PC-9 (cell line): ENCODE measurements at regions of chr19 and their contacts with region 1.

Region 1: DNA sequence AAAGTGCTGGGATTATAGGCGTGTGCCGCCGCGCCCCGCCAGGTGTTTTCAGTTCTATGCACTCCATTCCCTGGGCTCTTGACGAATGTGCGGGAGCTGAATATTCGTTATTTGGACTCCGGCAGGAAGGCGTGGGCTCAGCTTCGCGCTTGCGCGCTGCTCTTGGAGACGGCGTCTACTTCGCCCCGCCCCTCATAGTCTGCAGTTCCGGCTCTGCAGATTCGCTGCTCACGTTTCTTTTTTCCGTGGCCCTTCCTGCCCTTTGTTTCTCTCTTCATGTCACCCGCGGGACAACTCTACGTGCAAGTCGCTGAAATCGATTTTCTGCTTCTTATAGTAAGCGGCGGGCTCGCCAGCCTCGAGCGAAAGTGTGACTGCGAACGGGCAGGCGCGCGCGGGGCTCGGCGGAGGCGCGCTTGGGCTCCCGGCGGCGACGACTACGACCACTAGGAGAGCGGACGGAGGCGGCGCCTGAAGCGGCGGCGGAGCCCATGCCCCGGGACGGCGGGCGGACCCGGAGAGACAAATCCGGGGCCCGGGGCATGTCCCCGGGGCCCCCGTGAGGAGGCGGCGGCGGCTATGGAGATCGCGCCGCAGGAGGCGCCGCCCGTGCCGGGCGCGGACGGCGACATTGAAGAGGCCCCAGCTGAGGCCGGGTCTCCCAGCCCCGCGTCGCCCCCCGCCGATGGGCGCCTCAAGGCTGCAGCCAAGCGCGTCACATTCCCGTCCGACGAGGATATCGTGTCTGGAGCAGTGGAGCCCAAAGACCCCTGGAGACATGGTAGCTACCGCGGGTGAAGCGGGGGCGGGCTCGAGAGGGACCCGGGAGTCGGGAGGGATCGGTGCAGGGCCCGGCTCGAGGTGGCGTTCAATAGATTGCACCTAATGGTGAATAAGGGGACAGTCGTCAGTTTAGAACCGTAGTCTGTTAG is at the start of gene PPP1R37:
- DNase-seq: peak; percentile 90 to 94
- H3K4me3 ChIP-seq: peak within 1 kb of the TSS; percentile 80
- H3K27ac ChIP-seq: peak within 1 kb of the TSS; percentile 50
- H3K4me1 ChIP-seq: peaks cover 18% of the 10 kb centered on the region
- H3K27me3 ChIP-seq: no peaks in the 10 kb centered on the region
- CTCF ChIP-seq: peak; percentile 44; the same call in 1 of the 2 replicates
- total RNA-seq, gene PPP1R37: 41.1 and 49.5 TPM in 2 replicates

Region 2: DNA sequence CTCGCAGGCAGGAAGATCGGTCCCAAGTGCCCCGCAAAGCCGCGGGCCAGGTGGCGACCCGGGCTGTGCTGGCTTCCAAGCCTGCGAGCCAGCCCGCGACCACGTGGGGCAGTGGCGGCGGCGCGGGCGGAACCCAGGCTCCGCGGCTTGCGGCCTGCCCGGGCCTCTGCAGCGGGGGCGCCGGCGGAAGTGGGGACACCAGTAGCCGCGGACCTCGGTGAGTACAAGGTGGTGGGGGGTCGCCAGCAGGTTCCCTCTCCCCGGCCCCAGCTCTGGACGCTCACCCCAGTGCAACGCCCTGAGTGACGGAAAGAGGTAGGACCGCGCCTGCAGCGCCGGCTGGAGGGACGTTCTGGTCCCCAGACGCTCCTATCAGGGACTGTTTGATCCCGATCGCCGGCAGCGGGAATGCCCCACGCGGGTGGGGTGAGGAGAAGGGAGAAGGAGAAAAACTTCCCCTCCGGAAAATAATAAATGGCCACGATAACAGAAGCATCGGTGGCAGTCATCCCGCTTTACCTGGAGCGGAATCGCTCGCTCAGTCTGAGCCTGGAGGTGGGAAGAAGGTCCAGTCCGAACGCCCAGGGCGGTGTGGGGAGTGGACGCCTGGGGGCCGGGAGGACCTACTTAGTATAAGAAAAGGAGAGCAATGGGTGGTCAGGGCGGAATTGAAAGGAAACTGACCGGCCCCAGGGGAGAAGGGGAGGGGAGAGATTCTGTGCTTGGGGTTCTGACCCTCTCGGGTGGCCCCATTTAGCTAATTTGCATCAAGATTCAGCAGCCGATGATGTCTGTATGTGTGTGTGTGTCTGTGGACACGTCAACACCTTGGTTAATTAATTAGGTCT is 13.7 kb before region 1 on chr19 and contains the start of gene GEMIN7:
- CTCF ChIA-PET with region 1: interaction called, 5 read pairs
- POLR2A ChIA-PET with region 1: interaction called, 6 read pairs
- intact Hi-C with region 1: loop called (anchors 2 kb)
- DNase-seq: peak; percentile 64 to 83
- H3K4me3 ChIP-seq: peak within 1 kb of the TSS; percentile 83
- H3K27ac ChIP-seq: peak within 1 kb of the TSS; percentile 48
- H3K4me1 ChIP-seq: peaks cover 32% of the 10 kb centered on the region
- H3K27me3 ChIP-seq: no peaks in the 10 kb centered on the region
- CTCF ChIP-seq: no peak
- total RNA-seq, gene GEMIN7: 29.6 and 30.6 TPM in 2 replicates

Region 3: DNA sequence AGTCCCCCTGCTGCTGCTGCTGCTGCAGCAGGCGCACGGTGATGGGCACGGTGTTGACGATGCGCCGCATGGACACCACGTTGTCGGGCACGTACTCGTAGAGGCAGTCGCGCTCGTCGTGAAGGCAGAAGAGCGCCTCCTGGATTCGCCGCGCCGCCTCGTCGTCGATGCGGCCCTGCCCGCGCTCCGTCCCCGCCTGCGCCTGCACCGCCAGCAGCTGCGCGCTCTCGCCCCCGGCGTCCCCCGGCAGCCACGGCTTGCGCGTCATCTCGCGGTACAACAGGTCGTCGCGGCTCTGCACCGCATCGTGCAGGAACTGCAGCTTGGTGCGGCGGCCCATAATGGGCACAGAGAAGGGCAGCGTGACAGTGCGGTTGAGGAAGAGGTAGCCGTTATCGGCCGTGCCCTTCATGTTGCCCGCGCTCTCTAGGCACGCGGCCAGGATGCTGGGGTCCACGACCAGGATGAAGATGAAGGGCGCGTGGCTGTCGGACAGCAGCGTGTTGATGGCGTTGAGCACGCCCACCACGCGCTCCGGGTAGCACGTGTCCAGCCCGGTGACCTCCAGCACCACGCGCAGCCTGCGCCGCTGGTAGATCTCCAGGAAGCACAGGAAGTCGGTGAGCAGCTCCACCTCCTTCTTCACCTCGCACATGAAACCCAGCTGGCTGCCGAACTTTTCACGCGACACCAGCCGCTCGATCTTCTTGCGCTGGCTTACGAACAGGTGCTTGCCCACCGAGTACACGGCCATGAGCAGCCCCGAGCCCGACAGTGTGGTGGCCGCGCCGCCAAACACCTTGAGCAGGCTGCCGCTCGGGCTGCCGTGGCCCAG is 59.7 kb after region 1 on chr19:
- CTCF ChIA-PET with region 1: no interaction called
- POLR2A ChIA-PET with region 1: no interaction called
- intact Hi-C with region 1: loop called (anchors 5 kb)
- DNase-seq: no peak
- H3K4me3 ChIP-seq: no peak overlapping the region
- H3K27ac ChIP-seq: no peak overlapping the region
- H3K4me1 ChIP-seq: peaks cover 47% of the 10 kb centered on the region
- H3K27me3 ChIP-seq: no peaks in the 10 kb centered on the region
- CTCF ChIP-seq: no peak

Region 4: GRCh38 chr19:45178262-45179071 is 85.5 kb after region 1 on chr19 and contains the start of gene BLOC1S3:
- CTCF ChIA-PET with region 1: no interaction called
- POLR2A ChIA-PET with region 1: interaction called, 4 read pairs
- intact Hi-C with region 1: loop called (anchors 2 kb)
- DNase-seq: peak; percentile 100
- H3K4me3 ChIP-seq: peak within 1 kb of the TSS; percentile 86
- H3K27ac ChIP-seq: peak within 1 kb of the TSS; percentile 84
- H3K4me1 ChIP-seq: peaks cover 39% of the 10 kb centered on the region
- H3K27me3 ChIP-seq: no peaks in the 10 kb centered on the region
- CTCF ChIP-seq: peak; percentile 61
- total RNA-seq, gene BLOC1S3: 11.5 and 17.8 TPM in 2 replicates

Region 5: GRCh38 chr19:45293682-45294081 is 200.7 kb after region 1 on chr19:
- CTCF ChIA-PET with region 1: no interaction called
- POLR2A ChIA-PET with region 1: no interaction called
- intact Hi-C with region 1: no loop called
- DNase-seq: no peak
- H3K4me3 ChIP-seq: no peak overlapping the region
- H3K27ac ChIP-seq: no peak overlapping the region
- H3K4me1 ChIP-seq: no peaks in the 10 kb centered on the region
- H3K27me3 ChIP-seq: no peaks in the 10 kb centered on the region
- CTCF ChIP-seq: no peak

Region 6: DNA sequence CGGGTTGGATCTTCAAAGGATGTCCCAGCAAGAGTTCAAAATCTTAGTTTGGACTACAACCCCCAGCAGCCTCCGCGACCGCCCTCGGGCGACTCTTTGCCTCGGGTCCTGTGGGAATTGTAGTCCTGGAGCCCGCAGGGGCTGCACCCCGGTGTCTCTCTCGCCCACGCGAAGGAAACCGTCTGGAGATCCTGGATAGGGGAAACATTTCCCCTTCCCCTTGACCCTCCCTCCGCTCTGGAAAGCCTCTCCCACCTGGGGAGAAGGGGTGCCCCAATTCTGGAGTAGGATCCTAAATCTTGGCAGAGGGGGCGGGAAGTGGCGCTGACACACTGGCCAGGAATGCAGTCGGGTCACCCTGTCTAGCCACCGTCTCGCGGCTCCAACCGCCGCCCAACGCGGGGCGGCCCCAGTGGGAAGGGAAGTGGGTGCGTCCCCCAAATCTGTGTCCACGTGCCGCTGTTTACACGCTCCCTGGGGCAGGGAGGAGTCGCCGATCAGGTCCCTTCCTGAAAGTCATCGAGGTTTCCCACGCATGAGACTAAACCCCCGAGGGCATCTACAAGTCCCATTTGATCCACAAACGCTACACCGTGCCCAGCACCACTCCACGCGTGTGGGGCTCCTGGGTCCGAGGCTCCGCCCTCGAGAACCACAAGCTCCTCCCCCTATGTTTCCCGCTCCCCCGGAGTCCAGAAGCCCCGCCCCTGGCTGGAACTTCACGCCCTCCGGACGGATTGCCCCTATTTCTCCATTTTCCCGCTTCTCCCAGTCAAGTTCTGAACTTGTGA is 312.6 kb after region 1 on chr19:
- CTCF ChIA-PET with region 1: no interaction called
- POLR2A ChIA-PET with region 1: no interaction called
- intact Hi-C with region 1: loop called (anchors 10 kb)
- DNase-seq: peak; percentile 90 to 94
- H3K4me3 ChIP-seq: peak overlapping the region; percentile 95
- H3K27ac ChIP-seq: peak overlapping the region; percentile 91
- H3K4me1 ChIP-seq: peaks cover 18% of the 10 kb centered on the region
- H3K27me3 ChIP-seq: no peaks in the 10 kb centered on the region
- CTCF ChIP-seq: no peak

Region 7: GRCh38 chr19:45632468-45633196 is 539.6 kb after region 1 on chr19:
- CTCF ChIA-PET with region 1: no interaction called
- POLR2A ChIA-PET with region 1: no interaction called
- intact Hi-C with region 1: no loop called
- DNase-seq: peak; percentile 90 to 94
- H3K4me3 ChIP-seq: no peak overlapping the region
- H3K27ac ChIP-seq: peak overlapping the region; percentile 54
- H3K4me1 ChIP-seq: peaks cover 34% of the 10 kb centered on the region
- H3K27me3 ChIP-seq: no peaks in the 10 kb centered on the region
- CTCF ChIP-seq: no peak

Region 8: DNA sequence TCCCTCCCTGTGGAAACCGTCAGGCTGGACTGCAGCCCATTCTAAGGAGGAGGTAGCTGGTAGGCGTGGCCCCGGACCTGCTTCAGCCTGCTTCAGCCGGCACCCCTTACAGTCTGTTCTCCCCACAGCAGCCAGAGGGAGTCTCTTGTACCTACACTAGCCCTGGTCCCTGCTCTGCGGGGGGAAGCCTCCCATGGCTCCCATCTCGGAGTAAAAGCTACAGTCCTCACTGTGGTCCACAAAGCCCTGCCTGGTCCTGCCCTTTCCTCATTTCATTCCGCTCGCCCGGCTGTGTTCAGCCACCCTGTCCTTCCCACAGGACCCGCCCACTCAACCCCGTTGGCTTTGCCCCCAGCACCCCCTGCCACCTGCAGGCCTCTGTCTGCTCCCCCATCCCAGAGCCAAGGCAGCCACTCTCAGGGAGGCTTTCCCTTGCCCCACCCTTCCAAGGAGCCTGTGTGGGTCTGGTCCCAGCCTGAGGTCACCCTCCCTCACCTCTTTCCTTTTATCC is 928.6 kb after region 1 on chr19:
- CTCF ChIA-PET with region 1: no interaction called
- POLR2A ChIA-PET with region 1: no interaction called
- intact Hi-C with region 1: no loop called
- DNase-seq: no peak
- H3K4me3 ChIP-seq: no peak overlapping the region
- H3K27ac ChIP-seq: no peak overlapping the region
- H3K4me1 ChIP-seq: no peaks in the 10 kb centered on the region
- H3K27me3 ChIP-seq: no peaks in the 10 kb centered on the region
- CTCF ChIP-seq: no peak